ENCODE measurements at regions of chr3 and their contacts with region 1.

Region 1: DNA sequence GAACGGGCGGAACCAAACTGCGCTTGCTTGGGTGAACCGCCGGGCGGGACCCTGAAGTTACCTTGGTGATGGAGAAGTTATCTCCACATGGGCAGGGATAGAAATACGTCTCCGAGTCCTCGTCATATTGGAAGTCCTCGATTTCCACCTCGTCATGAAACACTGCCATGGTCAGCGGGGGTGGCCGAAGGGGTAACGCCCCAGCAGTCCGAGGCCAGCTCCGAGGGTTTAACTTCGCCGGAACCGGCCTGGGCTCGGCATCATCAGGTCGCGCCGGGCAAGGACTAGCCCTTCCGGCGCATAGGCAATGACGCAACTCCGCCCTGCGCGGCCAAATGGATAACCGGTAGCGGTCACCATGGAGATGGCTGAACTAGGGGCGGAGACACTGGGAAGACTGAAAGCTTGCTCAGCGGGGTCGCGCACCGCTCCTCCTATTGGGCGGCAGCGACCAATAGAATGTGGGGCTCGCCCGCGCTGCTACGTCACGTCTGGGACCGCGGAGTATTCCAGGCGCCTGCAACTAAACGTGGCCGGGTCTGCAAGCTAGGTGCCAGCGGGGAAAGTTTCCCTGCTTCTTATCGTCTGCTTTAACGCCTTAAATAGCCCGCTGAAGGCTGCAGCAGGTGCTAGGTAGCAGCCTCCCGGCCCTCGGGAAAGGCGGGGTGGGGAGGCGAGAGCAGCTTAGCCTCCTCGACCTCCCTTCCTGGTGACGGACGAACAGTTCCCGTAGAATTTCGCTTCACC is at the starts of genes DPH3 and OXNAD1:
- DNase-seq: peak; percentile 99
- H3K4me3 ChIP-seq: peak within 1 kb of the TSS; percentile 92
- H3K27ac ChIP-seq: peak within 1 kb of the TSS; percentile 83
- H3K27me3 ChIP-seq: no peaks in the 10 kb centered on the region
- CTCF ChIP-seq: 0 out of 2 replicates have a peak, but pooled peaks have one; percentile 7
- polyA plus RNA-seq, gene DPH3: 27.7 and 31.4 TPM in 2 replicates
- polyA plus RNA-seq, gene OXNAD1: 7.9 and 9.0 TPM in 2 replicates

Region 2: DNA sequence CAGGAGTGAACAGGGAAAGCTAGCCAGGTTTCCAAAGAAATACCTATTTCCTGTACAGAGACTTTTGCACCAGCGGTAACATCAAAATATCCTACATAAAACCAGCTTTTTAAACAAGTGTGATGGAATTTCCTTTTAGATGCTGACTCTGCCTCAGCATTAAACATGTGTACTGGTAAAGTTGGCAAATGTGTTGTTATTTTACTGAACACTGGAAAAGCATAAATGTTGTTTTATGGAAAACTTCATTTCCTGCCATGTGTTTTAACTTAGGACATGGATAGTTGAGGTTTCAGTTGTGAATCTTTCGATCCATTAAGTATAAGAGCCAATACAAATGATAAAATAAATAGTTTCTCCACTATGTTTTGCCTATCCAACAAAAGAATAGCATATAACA is 15.8 kb after region 1 on chr3:
- CTCF ChIA-PET with region 1: interaction called, 14 read pairs
- POLR2A ChIA-PET with region 1: no interaction called
- DNase-seq: no peak
- H3K4me3 ChIP-seq: no peak overlapping the region
- H3K27ac ChIP-seq: no peak overlapping the region
- H3K27me3 ChIP-seq: no peaks in the 10 kb centered on the region
- CTCF ChIP-seq: no peak

Region 3: GRCh38 chr3:16516695-16517481 is 252.0 kb after region 1 on chr3:
- CTCF ChIA-PET with region 1: interaction called, 10 read pairs
- POLR2A ChIA-PET with region 1: no interaction called
- DNase-seq: peak; percentile 45
- H3K4me3 ChIP-seq: no peak overlapping the region
- H3K27ac ChIP-seq: no peak overlapping the region
- H3K27me3 ChIP-seq: no peaks in the 10 kb centered on the region
- CTCF ChIP-seq: peak; percentile 80

Region 4: DNA sequence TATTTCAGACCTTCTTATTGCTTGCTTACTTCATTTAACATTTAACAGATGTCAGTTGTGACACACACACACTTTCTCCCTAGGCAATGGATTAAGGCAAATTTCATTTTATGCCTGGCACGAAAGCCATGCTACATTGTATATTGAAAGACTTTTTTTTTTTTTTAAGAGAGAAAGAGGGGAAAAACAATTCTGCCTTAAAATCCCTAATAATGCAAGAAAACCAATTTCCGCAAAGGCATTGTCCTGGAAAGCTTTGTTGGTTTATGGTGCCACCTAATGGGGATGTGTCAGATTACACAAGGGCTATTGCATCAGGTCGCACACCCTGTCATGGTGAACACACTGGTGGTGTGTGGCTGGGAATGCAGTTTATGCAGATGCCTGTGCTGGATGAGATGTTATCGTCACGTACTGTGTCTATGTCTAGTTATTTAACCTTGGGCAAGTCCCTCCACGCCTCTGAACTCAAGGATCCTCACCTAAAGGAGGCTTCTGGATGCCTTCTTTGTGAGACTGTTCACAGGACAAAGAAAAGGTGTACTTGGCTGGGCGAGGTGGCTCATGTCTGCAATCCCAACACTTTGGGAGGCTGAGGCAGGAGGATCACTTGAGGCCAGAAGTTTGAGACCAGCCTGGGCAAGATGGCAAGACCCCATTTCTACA is 285.9 kb after region 1 on chr3:
- CTCF ChIA-PET with region 1: interaction called, 80 read pairs
- POLR2A ChIA-PET with region 1: no interaction called
- DNase-seq: peak; percentile 69
- H3K4me3 ChIP-seq: no peak overlapping the region
- H3K27ac ChIP-seq: no peak overlapping the region
- H3K27me3 ChIP-seq: peaks cover 11% of the 10 kb centered on the region
- CTCF ChIP-seq: peak; percentile 90